BJ (cell line): ENCODE measurements at regions of chr6 and their contacts with region 1.

Region 1: GRCh38 chr6:34922177-34922663 is 33.2 kb downstream of the ANKS1A start:
- DNase-seq: no peak
- H3K4me3 ChIP-seq: no peak overlapping the region
- H3K27me3 ChIP-seq: no peaks in the 10 kb centered on the region
- CTCF ChIP-seq: no peak

Region 2: DNA sequence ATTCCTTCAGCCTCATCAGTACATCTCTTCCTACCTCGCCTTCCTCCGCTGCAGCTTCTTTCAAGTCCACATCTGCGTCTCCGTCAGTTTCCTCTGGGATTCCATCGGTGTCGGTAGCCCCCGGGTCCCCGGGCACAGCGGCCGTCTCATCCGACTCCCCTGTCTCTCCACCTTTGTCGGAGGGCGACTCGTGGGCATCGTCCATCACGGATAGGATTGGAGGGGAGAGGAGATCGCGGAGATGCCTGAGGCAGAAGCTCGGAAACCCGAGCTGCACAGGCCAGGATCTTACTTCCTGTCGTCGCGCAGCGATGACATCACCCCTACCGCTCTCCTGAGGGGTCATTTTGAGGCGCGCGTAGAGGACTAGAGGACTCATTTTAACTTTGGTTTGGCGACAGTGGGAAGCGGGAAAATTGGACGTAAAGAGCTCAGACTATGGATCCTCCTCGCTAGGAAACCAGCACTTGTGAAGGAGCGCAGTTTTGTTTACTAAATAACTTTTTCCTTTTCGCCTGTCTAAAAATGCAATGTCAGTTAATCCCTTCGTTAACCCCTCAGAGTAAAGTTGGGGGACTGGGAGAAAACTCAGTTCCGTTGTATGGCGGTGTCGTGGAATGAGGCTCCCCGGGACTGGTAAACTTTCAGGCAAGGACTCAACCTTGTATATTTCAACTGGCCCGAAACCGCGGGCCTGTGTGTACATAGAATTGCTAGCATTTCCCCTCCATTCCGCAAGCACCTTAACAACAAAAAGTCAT is 34.3 kb before region 1 on chr6 and contains the start of gene TAF11:
- CTCF ChIA-PET with region 1: no interaction called
- POLR2A ChIA-PET with region 1: interaction called, 19 read pairs
- DNase-seq: peak; percentile 66
- H3K4me3 ChIP-seq: peak within 1 kb of the TSS; percentile 65
- H3K27me3 ChIP-seq: no peaks in the 10 kb centered on the region
- CTCF ChIP-seq: no peak
- polyA plus RNA-seq, gene TAF11: 15.2 and 24.7 TPM in 2 replicates

Region 3: GRCh38 chr6:34973547-34974248 is 51.5 kb after region 1 on chr6:
- CTCF ChIA-PET with region 1: no interaction called
- POLR2A ChIA-PET with region 1: no interaction called
- DNase-seq: no peak
- H3K4me3 ChIP-seq: no peak overlapping the region
- H3K27me3 ChIP-seq: no peaks in the 10 kb centered on the region
- CTCF ChIP-seq: no peak; the same call in 1 of the 2 replicates